Heart right ventricle (tissue), 16 donors: ENCODE measurements at regions of chr20 and their contacts with region 1.

Region 1: DNA sequence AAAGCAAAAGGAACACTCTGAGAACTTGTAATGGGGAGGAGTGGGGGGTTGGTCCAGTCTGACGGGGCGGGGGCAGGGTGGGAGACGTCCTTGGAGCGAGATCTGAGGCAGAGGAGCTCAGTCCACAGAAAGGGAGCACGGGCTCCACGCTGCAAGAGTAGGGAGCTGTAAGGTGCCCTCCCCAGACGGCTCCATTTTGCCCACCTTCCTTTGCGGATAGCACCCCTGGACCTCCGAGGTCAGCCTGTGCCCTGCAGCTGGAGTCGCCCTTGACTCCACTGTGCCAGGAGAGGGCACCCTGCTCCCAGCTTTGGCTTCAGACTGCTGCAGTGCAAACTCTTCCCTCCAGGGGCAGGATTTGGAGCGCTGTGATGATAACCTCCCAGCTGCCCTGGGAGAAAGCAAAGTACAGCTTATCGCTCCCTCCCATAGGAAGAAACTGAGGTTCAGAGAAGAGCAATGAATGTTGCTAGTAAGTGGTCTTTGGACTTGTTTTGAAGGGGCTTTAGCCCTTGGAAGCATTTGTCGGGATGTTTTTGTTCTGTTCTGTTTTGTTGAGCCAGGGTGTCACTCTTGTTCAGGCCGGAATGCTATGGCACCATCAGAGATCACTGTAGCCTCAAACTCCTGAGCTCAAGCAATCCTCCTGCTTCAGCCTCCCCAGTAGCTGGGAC is 9.5 kb upstream of the AHCY start:
- DNase-seq: peak; percentile 82 to 86
- ATAC-seq: peak; percentile 95 to 99 (median 98)
- H3K4me3 ChIP-seq: peak overlapping the region in 6 of 10 donors; percentile 11 to 31 (median 30)
- H3K27ac ChIP-seq: no peak overlapping the region
- H3K4me1 ChIP-seq: peaks cover 3 to 22% (median 17%) of the 10 kb centered on the region in 9 donors
- H3K27me3 ChIP-seq: peaks cover 0 to 19% (median 11%) of the 10 kb centered on the region in 7 donors
- CTCF ChIP-seq: peak; percentile 97 to 100 (median 100)

Region 2: DNA sequence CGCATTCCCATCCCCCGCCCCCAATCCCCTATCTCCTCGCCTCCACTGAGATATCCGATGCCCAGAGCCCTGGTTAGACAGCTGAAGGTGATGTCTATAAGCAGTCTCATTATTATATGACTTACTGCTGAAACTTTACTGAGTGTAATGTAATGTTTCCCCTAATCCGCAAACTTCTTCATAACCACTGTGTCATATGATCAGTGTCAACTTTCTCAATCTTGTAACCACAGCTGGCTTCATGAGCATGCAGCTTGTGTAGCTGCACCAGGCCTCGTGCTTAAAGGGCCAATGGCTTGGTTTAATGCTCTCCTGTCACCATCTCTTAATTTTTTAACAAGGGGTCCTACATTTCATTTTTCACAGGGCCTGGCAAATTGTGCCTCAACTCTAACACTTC is 63.4 kb before region 1 on chr20:
- intact Hi-C with region 1: no loop called
- DNase-seq: no peak
- ATAC-seq: peak in 1 of 8 donors; percentile 42
- H3K4me3 ChIP-seq: no peak overlapping the region
- H3K27ac ChIP-seq: peak overlapping the region in 1 of 10 donors; percentile 43
- H3K4me1 ChIP-seq: peaks cover 0 to 31% (median 0%) of the 10 kb centered on the region in 9 donors
- H3K27me3 ChIP-seq: no peaks in the 10 kb centered on the region
- CTCF ChIP-seq: no peak

Region 3: GRCh38 chr20:34389206-34389953 is 76.7 kb after region 1 on chr20:
- intact Hi-C with region 1: no loop called
- DNase-seq: no peak
- ATAC-seq: no peak
- H3K4me3 ChIP-seq: no peak overlapping the region
- H3K27ac ChIP-seq: no peak overlapping the region
- H3K4me1 ChIP-seq: peaks cover 7 to 66% (median 51%) of the 10 kb centered on the region in 9 donors
- H3K27me3 ChIP-seq: no peaks in the 10 kb centered on the region
- CTCF ChIP-seq: no peak

Region 4: GRCh38 chr20:34473262-34473883 is 160.7 kb after region 1 on chr20:
- intact Hi-C with region 1: loop called in 8 of 10 experiments (anchors 2 to 10 kb)
- DNase-seq: peak; percentile 26 to 40
- ATAC-seq: peak in 7 of 8 donors; percentile 66 to 92 (median 88)
- H3K4me3 ChIP-seq: no peak overlapping the region
- H3K27ac ChIP-seq: peak overlapping the region in 3 of 10 donors; percentile 10 to 23 (median 22)
- H3K4me1 ChIP-seq: peaks cover 4 to 28% (median 20%) of the 10 kb centered on the region in 9 donors
- H3K27me3 ChIP-seq: no peaks in the 10 kb centered on the region
- CTCF ChIP-seq: peak in 6 of 9 donors; percentile 30 to 59 (median 48)

Region 5: DNA sequence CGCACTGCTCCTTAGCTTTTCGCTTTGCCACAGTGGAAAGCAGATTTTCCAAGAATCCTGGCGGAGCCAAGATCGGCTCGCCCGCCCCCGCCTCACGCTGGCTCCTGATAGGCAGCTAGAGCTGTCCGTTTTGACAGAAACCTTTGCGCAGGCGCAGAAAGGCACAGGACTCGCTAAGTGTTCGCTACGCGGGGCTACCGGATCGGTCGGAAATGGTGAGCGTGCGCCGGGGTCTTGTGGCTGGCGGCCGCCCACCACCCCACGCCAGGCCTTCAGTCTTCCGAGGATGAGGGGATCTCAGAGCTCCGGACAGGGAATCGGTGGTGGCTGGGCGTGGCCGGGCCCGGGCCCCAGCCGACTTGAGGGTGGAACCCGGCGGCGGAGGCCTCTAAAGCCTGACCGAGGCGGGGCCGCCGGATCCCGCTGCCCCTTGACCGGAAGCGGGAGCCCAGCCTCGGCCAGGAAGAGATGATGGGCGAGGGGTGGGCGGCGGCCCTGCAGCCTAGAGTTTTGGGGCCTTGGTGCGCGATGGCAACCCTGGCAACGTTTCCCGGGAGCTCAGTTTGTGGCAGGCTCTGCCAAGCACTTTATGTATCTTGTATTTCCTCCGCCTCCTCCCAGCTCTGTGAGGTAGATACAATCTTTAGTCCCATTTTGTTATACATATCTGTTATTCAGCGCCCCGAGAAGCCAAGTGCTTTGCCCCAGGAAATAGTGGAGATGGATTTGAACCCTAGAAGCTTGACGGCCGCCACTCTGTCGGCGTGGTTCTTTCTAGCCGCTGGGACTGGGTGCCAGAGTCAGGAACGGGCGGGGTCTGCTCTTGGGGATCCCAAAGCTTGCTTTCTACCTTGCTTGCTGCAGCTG is 203.8 kb after region 1 on chr20 and contains the start of gene DYNLRB1:
- intact Hi-C with region 1: loop called in 6 of 10 experiments (anchors 5 to 10 kb)
- DNase-seq: peak; percentile 97 to 98
- ATAC-seq: peak; percentile 96 to 98 (median 97)
- H3K4me3 ChIP-seq: peak within 1 kb of the TSS; percentile 48 to 92 (median 74)
- H3K27ac ChIP-seq: peak within 1 kb of the TSS; percentile 85 to 98 (median 96)
- H3K4me1 ChIP-seq: peaks cover 0 to 75% (median 43%) of the 10 kb centered on the region in 9 donors
- H3K27me3 ChIP-seq: no peaks in the 10 kb centered on the region
- CTCF ChIP-seq: no peak
- total RNA-seq, gene DYNLRB1: 132 to 187 (median 148) TPM

Region 6: DNA sequence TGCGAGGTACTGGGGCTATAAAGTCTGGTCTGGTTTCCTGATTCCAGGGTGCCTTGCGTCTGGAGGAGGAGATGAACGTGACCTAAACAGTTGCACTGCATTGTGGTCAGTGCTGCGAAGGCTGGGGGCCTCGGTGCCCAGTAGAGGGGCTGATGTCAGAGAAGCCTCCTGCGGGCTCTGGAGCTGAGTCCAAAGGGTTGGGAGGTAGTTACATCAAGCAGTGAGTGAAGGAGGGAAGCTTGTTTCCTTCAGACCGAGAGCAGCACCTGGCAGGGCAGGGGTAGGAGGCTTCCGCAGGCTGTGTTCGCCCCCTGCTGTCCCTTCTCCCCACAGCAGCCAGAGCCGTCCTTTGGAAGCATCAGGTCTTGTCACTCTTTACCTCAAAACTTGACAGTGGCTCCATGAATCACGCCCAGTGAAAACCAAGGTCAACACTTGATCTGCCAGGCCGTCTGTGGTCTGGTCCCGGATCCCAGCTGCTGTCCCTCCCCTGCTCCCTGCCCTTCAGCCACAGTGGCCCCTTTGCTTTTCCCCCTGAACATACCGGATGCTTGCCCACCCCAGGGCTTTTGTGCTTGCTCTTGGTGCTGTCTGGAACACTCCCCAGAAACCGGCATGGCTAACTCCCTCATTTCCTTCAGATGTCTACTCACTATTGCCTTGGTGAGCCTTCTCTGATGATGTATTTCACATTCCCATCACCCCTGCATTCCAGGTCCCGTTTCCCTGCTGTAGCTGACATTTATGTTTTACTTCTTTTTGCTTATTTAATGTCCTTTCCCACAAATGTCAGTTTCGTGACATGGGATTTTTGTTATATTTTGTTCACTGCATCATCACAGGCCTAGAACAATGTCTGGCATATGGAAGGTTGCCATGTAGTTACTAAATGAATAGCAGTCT is 210.5 kb after region 1 on chr20:
- intact Hi-C with region 1: loop called in 7 of 10 experiments (anchors 5 to 10 kb)
- DNase-seq: no peak
- ATAC-seq: peak in 7 of 8 donors; percentile 12 to 57 (median 36)
- H3K4me3 ChIP-seq: no peak overlapping the region
- H3K27ac ChIP-seq: peak overlapping the region in 6 of 10 donors; percentile 7 to 57 (median 38)
- H3K4me1 ChIP-seq: peaks cover 13 to 89% (median 60%) of the 10 kb centered on the region in 9 donors
- H3K27me3 ChIP-seq: no peaks in the 10 kb centered on the region
- CTCF ChIP-seq: peak in 8 of 9 donors; percentile 21 to 63 (median 52)

Region 7: GRCh38 chr20:34768096-34768495 is 455.4 kb after region 1 on chr20:
- intact Hi-C with region 1: loop called in 9 of 10 experiments (anchors 5 to 10 kb)
- DNase-seq: no peak
- ATAC-seq: no peak
- H3K4me3 ChIP-seq: no peak overlapping the region
- H3K27ac ChIP-seq: no peak overlapping the region
- H3K4me1 ChIP-seq: peaks cover 0 to 7% (median 0%) of the 10 kb centered on the region in 9 donors
- H3K27me3 ChIP-seq: no peaks in the 10 kb centered on the region
- CTCF ChIP-seq: no peak